Common myeloid progenitor, CD34-positive (primary cell): ENCODE measurements at regions of chr1 and their contacts with region 1.

Region 1: DNA sequence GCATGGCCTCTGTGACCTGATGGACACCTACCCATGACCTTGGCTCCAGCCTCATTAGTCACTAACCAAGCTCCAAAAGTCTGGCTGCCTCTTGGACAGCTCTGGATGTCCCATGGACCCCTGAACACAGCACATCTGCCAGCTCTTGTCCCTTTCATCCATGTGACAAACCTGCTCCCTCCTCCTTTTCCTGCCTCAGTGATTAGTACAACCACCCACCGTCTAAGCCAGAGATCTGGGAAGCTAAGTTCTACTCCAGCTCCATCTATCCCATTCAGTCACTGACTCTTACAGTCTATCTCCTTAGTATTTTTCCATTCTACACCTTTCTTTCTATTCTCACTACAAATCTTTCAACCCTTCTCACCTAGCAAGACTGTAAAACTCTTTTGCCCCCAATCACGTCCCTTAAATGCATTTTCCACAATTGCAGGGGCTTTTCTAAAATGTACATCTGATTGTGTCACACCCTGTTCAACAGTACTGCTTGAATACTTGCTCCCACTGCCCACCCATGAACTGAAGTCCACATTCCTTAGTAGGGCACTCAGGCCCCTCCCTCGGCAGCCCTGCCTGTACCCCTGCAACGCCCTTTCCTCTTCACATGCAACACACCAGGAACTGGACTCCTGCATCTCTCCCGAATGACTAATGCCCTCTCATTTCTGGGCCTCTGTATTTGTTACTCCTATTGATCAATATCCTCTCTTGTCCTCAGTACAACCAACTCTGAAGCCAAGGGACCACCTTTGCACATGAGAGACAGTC is 7.2 kb downstream of the GPN2 start:
- DNase-seq: no peak
- H3K4me3 ChIP-seq: no peak overlapping the region
- H3K27ac ChIP-seq: no peak overlapping the region
- H3K4me1 ChIP-seq: no peaks in the 10 kb centered on the region
- H3K27me3 ChIP-seq: no peaks in the 10 kb centered on the region

Region 2: GRCh38 chr1:26772687-26773086 is 110.2 kb before region 1 on chr1:
- CTCF ChIA-PET with region 1: no interaction called
- POLR2A ChIA-PET with region 1: no interaction called
- DNase-seq: no peak
- H3K4me3 ChIP-seq: no peak overlapping the region
- H3K27ac ChIP-seq: no peak overlapping the region
- H3K4me1 ChIP-seq: peaks cover 0 to 16% (median 9%) of the 10 kb centered on the region in 4 experiments
- H3K27me3 ChIP-seq: no peaks in the 10 kb centered on the region

Region 3: DNA sequence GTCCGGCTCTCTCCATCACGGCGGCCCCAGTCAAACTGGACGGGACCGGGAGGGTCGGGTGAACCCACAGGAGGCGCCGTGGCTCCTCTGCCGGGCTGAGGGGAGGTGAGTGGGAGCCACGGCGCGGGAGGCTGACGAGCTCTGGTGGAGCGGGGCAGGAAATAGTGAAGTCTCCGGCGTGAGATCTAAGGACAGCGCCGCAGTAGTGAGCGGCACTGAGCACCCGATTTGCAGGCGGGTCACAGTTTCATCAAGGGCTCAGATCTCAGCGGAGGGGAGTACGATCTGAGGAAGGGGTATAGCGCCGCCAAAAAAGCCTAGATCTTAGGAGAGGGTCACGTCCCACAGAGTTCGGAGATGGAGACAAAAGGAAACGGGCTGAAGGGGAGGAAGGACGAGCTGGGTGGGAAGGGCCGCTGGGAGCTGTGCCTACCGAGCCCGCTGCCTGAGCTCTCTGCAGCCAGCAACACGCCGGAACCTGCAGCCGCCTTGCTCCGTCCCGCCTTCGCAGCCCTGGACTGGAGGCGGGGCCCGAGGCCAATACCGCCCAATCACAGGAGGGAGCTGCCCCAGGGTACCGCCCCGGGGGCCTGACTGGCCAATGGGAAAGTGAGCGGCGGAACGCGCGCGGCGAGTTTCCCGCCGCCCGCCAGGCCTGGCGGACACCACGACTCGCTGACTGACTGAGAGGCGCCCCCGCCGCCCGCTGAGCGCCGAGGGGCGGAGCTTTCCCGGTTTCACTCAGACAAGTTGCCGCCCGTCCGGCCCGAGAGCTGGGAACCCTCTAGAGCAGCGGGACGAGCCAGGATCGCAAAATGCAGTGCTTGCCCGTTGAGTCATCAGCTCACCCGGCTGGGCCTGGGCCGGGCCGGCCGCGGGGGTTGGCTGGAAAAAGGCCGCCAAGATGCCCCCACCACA is 18.0 kb before region 1 on chr1:
- CTCF ChIA-PET with region 1: interaction called, 56 read pairs
- POLR2A ChIA-PET with region 1: interaction called, 3 read pairs
- DNase-seq: peak; percentile 94 to 96 (median 95)
- H3K4me3 ChIP-seq: peak overlapping the region; percentile 69 to 97 (median 86)
- H3K27ac ChIP-seq: peak overlapping the region in 1 of 2 experiments; percentile 78
- H3K4me1 ChIP-seq: peaks cover 0 to 20% (median 14%) of the 10 kb centered on the region in 4 experiments
- H3K27me3 ChIP-seq: no peaks in the 10 kb centered on the region